ENCODE measurements at regions of chr12 and their contacts with region 1.

Region 1: DNA sequence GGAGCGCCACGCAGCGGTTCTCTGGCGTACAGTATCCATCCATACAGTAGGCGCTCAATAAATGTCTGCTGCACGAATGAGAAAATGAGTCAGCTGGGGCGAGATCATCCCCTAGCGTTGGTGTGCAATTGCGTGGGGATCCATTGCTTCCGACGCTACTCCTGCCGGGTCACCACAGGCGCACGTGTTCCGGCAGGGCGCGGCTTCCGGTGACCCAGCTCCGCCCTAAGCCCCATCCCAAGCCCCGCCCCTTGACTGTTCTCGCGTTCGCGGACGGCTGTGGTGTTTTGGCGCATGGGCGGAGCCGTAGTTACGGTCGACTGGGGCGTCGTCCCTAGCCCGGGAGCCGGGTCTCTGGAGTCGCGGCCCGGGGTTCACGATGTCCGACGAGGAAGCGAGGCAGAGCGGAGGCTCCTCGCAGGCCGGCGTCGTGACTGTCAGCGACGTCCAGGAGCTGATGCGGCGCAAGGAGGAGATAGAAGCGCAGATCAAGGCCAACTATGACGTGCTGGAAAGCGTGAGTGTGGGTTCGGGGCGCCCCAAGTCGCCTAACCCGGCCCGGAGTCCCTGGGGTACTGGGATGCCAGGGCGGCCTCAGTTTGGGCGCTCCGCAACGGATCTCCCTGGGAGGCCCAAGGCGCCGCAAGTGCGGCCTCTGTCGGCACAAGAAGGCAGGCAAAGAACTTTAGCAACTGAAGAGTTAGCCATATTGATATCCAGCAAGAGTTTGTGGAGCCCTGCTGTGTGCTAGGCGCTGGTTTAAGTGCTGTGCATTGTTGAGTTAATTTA is at the start of gene PSMD9:
- DNase-seq: peak; percentile 99
- H3K4me3 Mint-ChIP-seq: peak within 1 kb of the TSS; percentile 96
- H3K27ac Mint-ChIP-seq: peak within 1 kb of the TSS; percentile 99
- H3K4me1 Mint-ChIP-seq: peaks cover 45% of the 10 kb centered on the region
- H3K27me3 Mint-ChIP-seq: no peaks in the 10 kb centered on the region
- total RNA-seq, gene PSMD9: 56.3 to 59.7 TPM

Region 2: DNA sequence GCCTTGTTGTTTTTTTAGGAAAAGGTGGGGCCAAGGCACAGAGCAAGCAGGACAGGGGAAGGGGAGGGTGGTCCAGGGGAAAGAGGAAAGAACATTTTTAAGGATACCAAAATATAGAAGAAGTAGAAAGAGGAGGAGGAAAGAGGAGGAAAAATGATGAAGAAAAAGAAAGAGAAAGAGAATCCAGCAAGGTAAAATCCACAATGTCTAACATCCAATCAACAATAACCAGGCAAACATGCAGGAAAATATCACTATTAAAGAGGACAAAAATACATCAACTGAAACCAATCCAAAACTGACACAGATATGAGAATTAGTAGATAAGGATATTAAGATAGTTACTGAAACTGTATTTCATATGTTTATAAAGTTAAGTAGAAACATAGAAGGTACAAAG is 183.2 kb before region 1 on chr12:
- CTCF ChIA-PET with region 1: no interaction called
- POLR2A ChIA-PET with region 1: no interaction called
- DNase-seq: no peak
- H3K4me3 Mint-ChIP-seq: no peak overlapping the region
- H3K27ac Mint-ChIP-seq: no peak overlapping the region
- H3K4me1 Mint-ChIP-seq: peaks cover 2% of the 10 kb centered on the region
- H3K27me3 Mint-ChIP-seq: peaks cover 11% of the 10 kb centered on the region

Region 3: GRCh38 chr12:121729021-121729420 is 159.7 kb before region 1 on chr12:
- CTCF ChIA-PET with region 1: no interaction called
- POLR2A ChIA-PET with region 1: no interaction called
- DNase-seq: no peak
- H3K4me3 Mint-ChIP-seq: no peak overlapping the region
- H3K27ac Mint-ChIP-seq: no peak overlapping the region
- H3K4me1 Mint-ChIP-seq: no peaks in the 10 kb centered on the region
- H3K27me3 Mint-ChIP-seq: no peaks in the 10 kb centered on the region

Region 4: DNA sequence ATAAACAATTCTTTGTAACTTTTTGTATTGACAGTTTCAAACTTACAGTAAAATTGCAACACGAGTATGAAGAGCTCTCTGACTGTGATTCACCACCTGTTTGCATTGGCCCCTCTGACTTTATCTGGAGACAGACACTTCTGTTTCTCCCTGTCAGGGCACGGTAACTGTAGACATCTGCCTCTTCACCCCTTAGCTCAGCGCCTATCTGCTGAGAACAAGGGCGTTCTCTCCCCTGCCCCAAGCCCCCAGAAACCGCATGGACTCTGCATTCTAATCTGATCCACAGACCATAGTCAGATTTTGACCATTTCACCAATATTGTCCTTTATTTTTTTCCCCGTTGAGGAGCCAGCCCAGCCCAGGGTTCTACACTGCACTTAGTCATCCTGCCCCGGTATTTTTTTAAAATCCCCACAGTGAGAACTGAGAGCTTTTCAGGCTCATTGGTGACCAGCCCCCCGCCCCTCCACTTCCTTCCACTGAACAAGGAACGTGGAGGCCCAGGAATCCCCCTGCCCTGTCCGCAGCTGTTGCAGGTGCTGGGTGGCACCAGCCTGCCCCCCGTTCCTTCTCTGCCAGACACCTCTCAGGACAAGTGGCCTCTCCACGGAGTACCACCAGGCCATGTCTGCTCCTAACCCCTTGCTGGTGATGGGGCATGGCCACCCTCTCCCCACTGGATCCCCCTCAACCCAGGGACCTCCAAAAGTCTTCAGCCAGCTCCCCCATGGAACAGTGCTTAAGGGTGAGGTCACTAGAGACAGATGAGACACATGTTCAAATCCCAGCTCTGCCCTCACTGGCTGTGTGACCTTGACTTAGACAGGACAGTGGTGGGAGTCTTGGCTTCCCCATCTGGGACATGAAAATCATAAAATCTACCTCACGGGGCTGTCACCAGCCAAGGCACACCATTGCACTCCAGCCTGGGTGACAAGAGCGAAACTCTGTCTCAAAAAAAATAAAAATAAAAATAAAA is 106.4 kb before region 1 on chr12:
- CTCF ChIA-PET with region 1: interaction called, 10 read pairs
- POLR2A ChIA-PET with region 1: interaction called, 12 read pairs
- DNase-seq: peak; percentile 55
- H3K4me3 Mint-ChIP-seq: peak overlapping the region; percentile 49
- H3K27ac Mint-ChIP-seq: peak overlapping the region; percentile 91
- H3K4me1 Mint-ChIP-seq: peaks cover 62% of the 10 kb centered on the region
- H3K27me3 Mint-ChIP-seq: no peaks in the 10 kb centered on the region

Region 5: GRCh38 chr12:121802846-121803630 is 85.6 kb before region 1 on chr12:
- CTCF ChIA-PET with region 1: interaction called, 83 read pairs
- POLR2A ChIA-PET with region 1: interaction called, 43 read pairs
- DNase-seq: peak; percentile 92
- H3K4me3 Mint-ChIP-seq: peak overlapping the region; percentile 81
- H3K27ac Mint-ChIP-seq: peak overlapping the region; percentile 100
- H3K4me1 Mint-ChIP-seq: peaks cover 36% of the 10 kb centered on the region
- H3K27me3 Mint-ChIP-seq: no peaks in the 10 kb centered on the region

Region 6: DNA sequence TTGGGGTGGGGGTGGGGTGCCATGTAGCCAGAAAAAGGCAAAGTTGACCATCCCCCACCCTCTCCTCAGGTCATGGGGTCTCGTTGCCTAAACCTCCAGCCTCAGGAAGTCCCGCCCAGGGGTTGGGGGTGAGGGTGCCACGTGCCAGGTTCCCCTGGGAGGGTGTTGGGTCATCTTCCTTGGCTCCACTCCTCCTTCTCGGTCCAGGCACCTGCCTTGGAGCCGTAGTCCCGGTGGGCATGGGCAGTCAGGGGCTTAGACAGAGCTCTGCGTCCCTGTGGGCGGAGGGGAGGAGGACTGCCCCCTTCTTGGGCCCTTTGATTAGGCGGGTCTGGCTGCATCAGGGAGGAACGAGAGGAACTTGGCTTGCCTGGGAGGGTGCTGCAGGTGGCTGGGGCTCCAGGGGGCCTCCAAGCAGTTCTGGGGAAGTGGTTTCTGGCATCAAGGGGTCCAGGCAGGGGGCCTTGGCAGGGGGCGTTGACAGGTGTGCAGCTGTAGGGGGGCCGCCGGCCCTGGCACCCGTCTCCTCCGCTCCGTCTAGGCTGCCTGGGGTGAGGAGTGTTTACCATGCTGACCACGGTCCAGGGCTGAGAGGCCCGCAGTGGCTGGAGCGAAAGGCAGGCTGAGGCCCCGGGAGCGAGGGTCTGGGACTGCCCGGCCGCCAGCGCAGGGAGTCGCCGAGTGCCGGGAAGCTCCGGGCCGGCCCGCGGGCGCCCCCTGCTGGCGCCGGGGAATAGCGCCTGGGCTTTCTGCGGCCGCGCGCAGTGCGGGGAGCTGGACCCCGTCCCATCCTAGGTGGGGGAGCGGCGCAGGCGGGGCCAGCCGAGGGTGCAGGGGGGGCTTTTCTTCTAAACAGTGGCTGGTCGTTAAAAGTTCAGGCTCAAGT is 77.0 kb before region 1 on chr12:
- CTCF ChIA-PET with region 1: interaction called, 38 read pairs
- POLR2A ChIA-PET with region 1: interaction called, 8 read pairs
- DNase-seq: peak; percentile 73
- H3K4me3 Mint-ChIP-seq: peak overlapping the region; percentile 81
- H3K27ac Mint-ChIP-seq: peak overlapping the region; percentile 61
- H3K4me1 Mint-ChIP-seq: peaks cover 57% of the 10 kb centered on the region
- H3K27me3 Mint-ChIP-seq: no peaks in the 10 kb centered on the region

Region 7: GRCh38 chr12:121857322-121858246 is 31.1 kb before region 1 on chr12:
- CTCF ChIA-PET with region 1: no interaction called
- POLR2A ChIA-PET with region 1: no interaction called
- DNase-seq: no peak
- H3K4me3 Mint-ChIP-seq: no peak overlapping the region
- H3K27ac Mint-ChIP-seq: no peak overlapping the region
- H3K4me1 Mint-ChIP-seq: peaks cover 2% of the 10 kb centered on the region
- H3K27me3 Mint-ChIP-seq: no peaks in the 10 kb centered on the region

Region 8: GRCh38 chr12:121917979-121918678 is 29.5 kb after region 1 on chr12 and contains the start of gene CFAP251:
- CTCF ChIA-PET with region 1: interaction called, 14 read pairs
- POLR2A ChIA-PET with region 1: interaction called, 6 read pairs
- DNase-seq: peak; percentile 98
- H3K4me3 Mint-ChIP-seq: peak within 1 kb of the TSS; percentile 77
- H3K27ac Mint-ChIP-seq: peak within 1 kb of the TSS; percentile 79
- H3K4me1 Mint-ChIP-seq: peaks cover 14% of the 10 kb centered on the region
- H3K27me3 Mint-ChIP-seq: no peaks in the 10 kb centered on the region
- total RNA-seq, gene CFAP251: 1.9 to 2.2 TPM

Region 9: GRCh38 chr12:122306407-122306806 is 417.7 kb after region 1 on chr12:
- CTCF ChIA-PET with region 1: no interaction called
- POLR2A ChIA-PET with region 1: no interaction called
- DNase-seq: no peak
- H3K4me3 Mint-ChIP-seq: no peak overlapping the region
- H3K27ac Mint-ChIP-seq: no peak overlapping the region
- H3K4me1 Mint-ChIP-seq: no peaks in the 10 kb centered on the region
- H3K27me3 Mint-ChIP-seq: no peaks in the 10 kb centered on the region

Measured in activated CD4-positive, alpha-beta memory T cell treated with anti-CD3 and anti-CD28 coated beads, Interleukin-2, amount 10 ng/mL, durations not matched to agents 7 days and 5 days (primary cell).